ENCODE measurements at regions of chr11 and their contacts with region 1.

Region 1: GRCh38 chr11:86938900-86939880 is 16.0 kb downstream of the FZD4 start:
- DNase-seq: peak; percentile 46 to 50
- ATAC-seq: peak; percentile 67 to 84; a peak in 5 of 6 replicates
- H3K4me3 ChIP-seq: no peak overlapping the region
- H3K27ac ChIP-seq: no peak overlapping the region
- H3K4me1 ChIP-seq: no peaks in the 10 kb centered on the region
- CTCF ChIP-seq: peak; percentile 81
- EP300 ChIP-seq: no peak
- POLR2A ChIP-seq: no peak
- RAD21 ChIP-seq: peak; percentile 72 to 77

Region 2: DNA sequence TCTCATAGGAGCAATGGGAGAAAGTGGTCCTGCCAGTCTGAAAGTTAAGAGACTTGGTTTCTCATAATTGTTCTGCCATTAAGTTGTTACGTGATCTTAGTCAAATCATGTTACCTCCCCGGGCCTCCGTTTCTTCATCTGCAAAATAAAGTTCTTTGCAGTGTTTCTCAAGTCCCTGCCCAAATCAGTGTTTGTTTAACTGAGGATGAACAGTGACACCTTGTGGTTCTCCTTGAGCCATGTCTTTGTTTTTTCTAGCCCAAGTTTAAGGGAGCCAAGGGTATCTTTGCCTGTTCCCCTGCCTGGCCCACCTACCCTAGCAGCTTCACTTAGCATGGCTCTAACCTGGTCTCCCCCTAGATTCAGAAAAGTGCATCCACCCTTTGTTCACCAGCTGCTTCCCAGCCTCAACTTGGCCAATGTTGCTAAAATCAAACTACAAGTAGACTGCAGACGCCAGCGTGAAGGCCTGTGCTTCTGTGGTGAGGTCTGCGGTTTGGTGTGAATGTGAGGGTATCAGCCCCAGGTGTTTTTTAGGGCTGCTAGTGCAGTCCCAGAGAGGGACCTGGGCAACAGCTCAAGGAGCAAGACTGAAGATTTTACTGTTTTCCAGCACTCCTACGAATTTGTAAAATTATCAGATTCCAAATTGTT is 19.5 kb before region 1 on chr11:
- CTCF ChIA-PET with region 1: interaction called, 31 read pairs
- POLR2A ChIA-PET with region 1: no interaction called
- DNase-seq: peak; percentile 57 to 74
- ATAC-seq: peak; percentile 86 to 90; a peak in 5 of 6 replicates
- H3K4me3 ChIP-seq: no peak overlapping the region
- H3K27ac ChIP-seq: peak overlapping the region in 1 of 2 experiments; percentile 48; a peak in 3 of 6 replicates
- H3K4me1 ChIP-seq: peaks cover 22% of the 10 kb centered on the region
- CTCF ChIP-seq: peak; percentile 87
- EP300 ChIP-seq: no peak
- POLR2A ChIP-seq: no peak
- RAD21 ChIP-seq: peak; percentile 89 to 94

Region 3: GRCh38 chr11:86955361-86956120 is 16.4 kb after region 1 on chr11 and contains the start of gene FZD4:
- CTCF ChIA-PET with region 1: interaction called, 46 read pairs
- POLR2A ChIA-PET with region 1: interaction called, 5 read pairs
- DNase-seq: peak; percentile 85 to 88
- ATAC-seq: peak; percentile 90 to 98
- H3K4me3 ChIP-seq: peak within 1 kb of the TSS; percentile 82
- H3K27ac ChIP-seq: peak within 1 kb of the TSS; percentile 78 to 92
- H3K4me1 ChIP-seq: peaks cover 9% of the 10 kb centered on the region; the same call in 1 of the 3 replicates
- CTCF ChIP-seq: peak; percentile 38; the same call in 2 of the 3 replicates
- EP300 ChIP-seq: no peak
- POLR2A ChIP-seq: no peak; the same call in 1 of the 2 replicates
- RAD21 ChIP-seq: peak; percentile 37 to 42; a peak in 3 of 5 replicates
- polyA plus RNA-seq, gene FZD4: 0.90 and 1.3 TPM in 2 replicates

Region 4: GRCh38 chr11:86972734-86973133 is 33.5 kb after region 1 on chr11:
- CTCF ChIA-PET with region 1: no interaction called
- POLR2A ChIA-PET with region 1: no interaction called
- DNase-seq: no peak
- ATAC-seq: no peak
- H3K4me3 ChIP-seq: no peak overlapping the region
- H3K27ac ChIP-seq: no peak overlapping the region
- H3K4me1 ChIP-seq: no peaks in the 10 kb centered on the region
- CTCF ChIP-seq: no peak
- EP300 ChIP-seq: no peak
- POLR2A ChIP-seq: no peak
- RAD21 ChIP-seq: no peak

Region 5: DNA sequence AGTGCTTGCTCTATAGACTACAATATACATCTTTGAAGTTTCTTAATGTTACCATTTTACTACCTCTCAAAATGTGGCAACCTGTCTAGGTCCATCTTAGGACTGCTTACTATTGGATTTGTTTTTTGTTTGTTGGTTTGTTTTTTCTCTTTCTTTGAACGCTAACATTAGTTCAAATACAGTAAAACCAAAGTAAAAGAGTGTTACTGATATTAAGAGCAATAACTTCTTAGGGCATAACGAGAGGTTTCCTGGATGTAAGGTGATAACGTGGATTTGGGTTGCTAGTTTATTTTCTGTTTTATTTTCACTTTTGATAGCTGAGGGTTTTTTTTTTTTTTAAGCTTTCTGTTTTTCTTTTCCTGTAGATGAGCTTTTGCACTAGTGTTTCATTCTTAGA is 142.2 kb after region 1 on chr11:
- CTCF ChIA-PET with region 1: no interaction called
- POLR2A ChIA-PET with region 1: no interaction called
- DNase-seq: no peak
- ATAC-seq: no peak
- H3K4me3 ChIP-seq: no peak overlapping the region
- H3K27ac ChIP-seq: no peak overlapping the region
- H3K4me1 ChIP-seq: no peaks in the 10 kb centered on the region
- CTCF ChIP-seq: no peak
- EP300 ChIP-seq: no peak
- POLR2A ChIP-seq: no peak
- RAD21 ChIP-seq: no peak

Region 6: GRCh38 chr11:87281496-87281895 is 342.3 kb after region 1 on chr11:
- CTCF ChIA-PET with region 1: interaction called, 10 read pairs
- POLR2A ChIA-PET with region 1: no interaction called
- DNase-seq: peak in 1 of 2 experiments; percentile 28
- ATAC-seq: peak in 1 of 2 experiments; percentile 64; a peak in 2 of 6 replicates
- H3K4me3 ChIP-seq: no peak overlapping the region
- H3K27ac ChIP-seq: no peak overlapping the region
- H3K4me1 ChIP-seq: peaks cover 8% of the 10 kb centered on the region; the same call in 2 of the 3 replicates
- CTCF ChIP-seq: peak; percentile 31
- EP300 ChIP-seq: no peak
- POLR2A ChIP-seq: no peak
- RAD21 ChIP-seq: peak; percentile 39 to 44

Region 7: DNA sequence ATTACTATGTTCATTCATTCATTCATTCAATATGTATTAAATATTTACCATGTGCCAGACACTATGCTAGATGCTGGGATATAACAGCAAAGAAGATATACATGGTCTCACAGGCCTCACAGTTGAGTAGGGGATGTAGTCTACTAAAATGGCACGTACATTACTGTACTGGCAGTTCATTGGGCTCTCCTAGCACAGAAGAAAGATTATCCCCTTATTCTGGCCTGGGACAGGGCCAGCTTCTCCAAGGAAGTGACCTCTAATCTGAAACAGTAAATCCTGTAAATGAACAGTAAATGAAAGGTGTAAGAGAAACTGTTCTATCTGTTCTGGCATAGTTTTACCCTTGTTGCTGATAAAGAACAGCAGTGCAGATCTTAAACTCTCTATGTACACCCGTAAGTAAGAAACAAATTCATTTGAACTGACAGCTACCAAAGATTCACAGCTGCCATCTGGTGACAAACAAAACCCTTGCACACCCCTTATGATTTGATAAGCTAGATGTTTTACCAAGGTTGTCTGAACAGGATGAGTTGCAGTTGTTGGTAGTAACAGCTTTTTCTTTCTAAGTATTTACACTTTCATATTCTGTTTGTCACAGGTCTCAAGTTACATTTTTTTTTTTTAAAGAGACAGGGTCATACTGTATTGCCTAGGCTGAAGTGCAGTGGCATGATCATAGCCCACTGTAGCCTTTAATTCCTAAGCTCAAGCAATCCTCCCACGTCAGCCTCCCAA is 361.6 kb after region 1 on chr11:
- CTCF ChIA-PET with region 1: interaction called, 23 read pairs
- POLR2A ChIA-PET with region 1: no interaction called
- DNase-seq: peak in 1 of 2 experiments; percentile 7
- ATAC-seq: peak in 1 of 2 experiments; percentile 34; a peak in 4 of 6 replicates
- H3K4me3 ChIP-seq: no peak overlapping the region
- H3K27ac ChIP-seq: no peak overlapping the region
- H3K4me1 ChIP-seq: no peaks in the 10 kb centered on the region
- CTCF ChIP-seq: no peak
- EP300 ChIP-seq: no peak
- POLR2A ChIP-seq: no peak
- RAD21 ChIP-seq: no peak

Region 8: GRCh38 chr11:87421422-87421821 is 482.2 kb after region 1 on chr11:
- CTCF ChIA-PET with region 1: interaction called, 20 read pairs
- POLR2A ChIA-PET with region 1: interaction called, 3 read pairs
- DNase-seq: peak; percentile 55 to 83
- ATAC-seq: peak; percentile 92 to 98
- H3K4me3 ChIP-seq: no peak overlapping the region
- H3K27ac ChIP-seq: no peak overlapping the region
- H3K4me1 ChIP-seq: no peaks in the 10 kb centered on the region
- CTCF ChIP-seq: peak; percentile 74
- EP300 ChIP-seq: no peak
- POLR2A ChIP-seq: no peak
- RAD21 ChIP-seq: peak; percentile 67 to 73

Region 9: DNA sequence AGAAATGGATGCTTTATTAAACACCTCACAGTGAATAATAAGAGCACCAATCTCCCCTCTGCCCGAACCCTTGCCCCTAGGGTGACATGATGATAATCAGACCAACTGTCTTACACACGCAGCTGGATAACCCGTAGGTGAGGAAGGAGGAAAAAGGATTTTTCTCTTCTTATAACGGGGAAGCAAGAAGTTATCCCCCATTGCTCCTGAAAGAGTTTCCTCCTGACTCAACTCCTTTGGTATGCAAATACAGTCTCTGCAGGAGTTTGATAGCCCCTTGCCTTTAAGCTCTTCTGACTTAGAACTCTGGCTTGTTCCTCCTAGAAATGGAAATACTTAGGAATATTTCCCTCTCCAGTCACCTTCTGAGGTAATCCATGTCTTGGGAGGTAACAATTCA is 554.3 kb after region 1 on chr11:
- CTCF ChIA-PET with region 1: no interaction called
- POLR2A ChIA-PET with region 1: no interaction called
- DNase-seq: no peak
- ATAC-seq: no peak
- H3K4me3 ChIP-seq: no peak overlapping the region
- H3K27ac ChIP-seq: no peak overlapping the region
- H3K4me1 ChIP-seq: no peaks in the 10 kb centered on the region
- CTCF ChIP-seq: no peak
- EP300 ChIP-seq: no peak
- POLR2A ChIP-seq: no peak
- RAD21 ChIP-seq: no peak